ENCODE measurements at regions of chr3 and their contacts with region 1.

Region 1: DNA sequence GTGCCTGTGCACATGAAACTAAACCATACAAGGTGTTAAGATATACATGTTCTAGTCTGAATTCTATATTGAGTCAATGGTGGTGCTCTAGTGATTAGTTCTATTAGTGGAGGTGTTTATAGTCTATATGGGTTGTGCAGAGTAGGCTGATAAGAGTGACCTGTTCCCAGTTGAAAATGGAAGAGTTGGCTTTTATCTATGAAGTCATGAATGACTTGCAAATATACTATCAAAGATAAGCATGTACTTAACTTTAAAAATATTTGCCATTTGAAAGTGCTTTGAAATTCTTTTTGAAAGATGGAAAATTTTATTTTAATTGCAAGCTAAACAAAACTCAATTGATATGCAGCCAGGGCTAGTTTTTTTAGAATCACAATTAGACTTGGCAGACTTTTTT is 150.6 kb upstream of the SGO1 start:
- DNase-seq: no peak
- ATAC-seq: no peak

Region 2: DNA sequence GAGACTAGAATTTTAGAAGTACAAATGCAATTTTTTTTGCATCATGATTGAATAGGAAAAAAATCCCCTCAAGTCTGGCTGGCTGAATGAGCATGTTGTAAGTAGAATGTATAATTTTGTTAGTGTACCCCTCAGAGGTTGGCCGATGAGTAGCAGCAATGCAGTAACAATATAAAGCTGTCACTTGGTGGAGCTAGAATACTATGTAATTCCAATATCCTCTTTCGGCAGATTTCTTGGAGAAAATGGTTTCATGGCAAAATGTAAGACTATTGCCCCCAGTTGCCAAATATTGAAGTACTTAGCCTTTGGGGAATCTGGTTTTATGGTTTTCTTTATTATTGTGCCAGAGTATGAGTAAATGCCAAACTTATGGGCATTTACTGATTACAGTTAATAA is 110.8 kb before region 1 on chr3:
- intact Hi-C with region 1: loop called (anchors 10 kb)
- DNase-seq: no peak
- ATAC-seq: no peak

Region 3: GRCh38 chr3:20235796-20236195 is 100.8 kb before region 1 on chr3:
- intact Hi-C with region 1: no loop called
- DNase-seq: no peak
- ATAC-seq: no peak

Region 4: DNA sequence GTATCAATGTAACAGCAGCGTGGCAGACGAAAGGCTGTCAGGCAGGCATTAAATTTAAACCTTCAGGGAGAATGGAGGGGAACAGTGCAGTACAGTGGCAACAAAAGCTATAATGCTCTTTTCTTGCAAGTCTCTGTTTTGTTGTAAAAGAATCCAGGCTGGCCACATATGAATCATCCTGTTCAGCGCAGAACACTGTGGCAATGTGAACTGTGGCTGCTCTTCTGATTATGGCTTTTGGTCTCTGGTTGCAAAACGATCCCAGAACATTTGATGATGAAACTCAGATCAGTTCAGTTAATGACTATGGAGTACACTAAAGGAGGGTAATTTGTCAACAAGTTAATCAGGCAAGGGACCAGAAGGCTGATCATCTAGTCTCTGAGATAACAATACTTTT is 69.2 kb after region 1 on chr3:
- intact Hi-C with region 1: no loop called
- DNase-seq: no peak
- ATAC-seq: no peak

Measured in Right ventricle myocardium inferior (tissue), 1 donor.